Tibial artery (tissue), 4 donors: ENCODE measurements at regions of chr3 and their contacts with region 1.

Region 1: GRCh38 chr3:9915254-9916141 is 1.4 kb upstream of the IL17RC start:
- DNase-seq: peak; percentile 81 to 89
- H3K4me3 ChIP-seq: peak overlapping the region; percentile 55 to 73
- H3K27ac ChIP-seq: peak overlapping the region; percentile 92 to 95
- H3K4me1 ChIP-seq: peaks cover 5 to 61% (median 40%) of the 10 kb centered on the region in 4 donors
- H3K27me3 ChIP-seq: no peaks in the 10 kb centered on the region
- CTCF ChIP-seq: peak in 1 of 2 experiments; percentile 51

Region 2: GRCh38 chr3:9779721-9780457 is 135.6 kb before region 1 on chr3:
- intact Hi-C with region 1: no loop called
- DNase-seq: no peak
- H3K4me3 ChIP-seq: no peak overlapping the region
- H3K27ac ChIP-seq: no peak overlapping the region
- H3K4me1 ChIP-seq: peaks cover 0 to 16% (median 3%) of the 10 kb centered on the region in 4 donors
- H3K27me3 ChIP-seq: no peaks in the 10 kb centered on the region
- CTCF ChIP-seq: no peak

Region 3: GRCh38 chr3:9843715-9844438 is 71.6 kb before region 1 on chr3 and contains the start of gene RPUSD3:
- intact Hi-C with region 1: loop called (anchors 5 kb)
- DNase-seq: peak; percentile 98 to 99
- H3K4me3 ChIP-seq: peak within 1 kb of the TSS; percentile 61 to 85
- H3K27ac ChIP-seq: peak within 1 kb of the TSS; percentile 80 to 84
- H3K4me1 ChIP-seq: peaks cover 0 to 16% (median 12%) of the 10 kb centered on the region in 4 donors
- H3K27me3 ChIP-seq: no peaks in the 10 kb centered on the region
- CTCF ChIP-seq: no peak

Region 4: DNA sequence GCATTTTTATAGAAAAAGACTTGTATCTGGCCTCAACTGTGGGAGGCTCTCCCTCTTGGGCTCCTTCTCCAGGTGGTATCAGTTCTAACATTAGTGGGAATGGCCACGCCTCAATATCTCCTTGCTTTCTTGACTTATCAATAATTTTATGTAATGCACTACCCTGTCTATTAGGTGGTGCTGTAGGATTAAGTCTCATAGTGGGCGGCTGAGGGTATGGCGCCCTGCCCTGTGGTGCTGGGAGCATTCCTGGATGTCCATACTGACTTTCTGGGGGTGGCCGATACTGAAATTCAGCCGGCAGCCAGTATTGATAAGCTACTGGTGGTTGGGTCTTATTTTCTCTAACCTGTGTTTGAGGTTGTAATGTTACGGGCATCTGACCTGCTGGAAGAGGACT is 62.9 kb before region 1 on chr3:
- intact Hi-C with region 1: loop called (anchors 5 kb)
- DNase-seq: no peak
- H3K4me3 ChIP-seq: no peak overlapping the region
- H3K27ac ChIP-seq: no peak overlapping the region
- H3K4me1 ChIP-seq: no peaks in the 10 kb centered on the region
- H3K27me3 ChIP-seq: no peaks in the 10 kb centered on the region
- CTCF ChIP-seq: no peak

Region 5: DNA sequence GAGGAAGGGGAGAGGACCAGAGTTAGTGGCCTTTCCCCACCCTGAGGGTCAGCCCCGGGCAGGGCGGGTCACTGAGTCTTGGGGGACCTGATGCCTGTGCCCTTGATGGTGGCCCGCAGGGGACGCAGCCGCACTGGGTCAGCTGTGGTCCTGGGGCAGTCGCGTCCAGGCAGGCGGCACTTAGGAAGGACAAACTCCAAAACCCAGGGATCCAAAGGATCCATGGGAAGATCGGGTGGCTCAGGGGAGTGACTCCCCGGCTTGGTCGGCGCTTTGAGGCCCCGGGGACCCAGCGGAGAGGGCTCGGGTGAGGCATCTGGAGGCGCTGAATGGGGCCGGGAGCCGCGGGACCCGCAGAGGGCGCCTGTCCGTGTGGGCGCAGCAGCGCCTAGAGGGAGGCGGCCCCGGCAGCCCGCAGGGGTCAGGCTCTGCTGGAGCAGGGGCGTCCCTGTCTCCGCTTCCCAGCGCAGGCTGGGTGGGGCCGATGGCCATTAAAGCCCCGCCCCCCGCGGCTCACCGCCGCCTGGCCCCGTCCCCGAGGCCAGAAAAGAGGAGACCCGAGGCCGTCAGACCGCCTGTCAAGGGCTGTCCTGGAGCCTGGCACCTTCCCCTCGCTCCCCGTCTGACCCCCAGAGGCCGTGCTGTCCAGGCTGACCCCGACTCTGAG is 53.0 kb before region 1 on chr3:
- intact Hi-C with region 1: loop called (anchors 5 kb)
- DNase-seq: peak in 1 of 2 donors; percentile 39
- H3K4me3 ChIP-seq: peak overlapping the region; percentile 29 to 35
- H3K27ac ChIP-seq: peak overlapping the region; percentile 78 to 79
- H3K4me1 ChIP-seq: peaks cover 0 to 50% (median 28%) of the 10 kb centered on the region in 4 donors
- H3K27me3 ChIP-seq: no peaks in the 10 kb centered on the region
- CTCF ChIP-seq: peak; percentile 18 to 27

Region 6: DNA sequence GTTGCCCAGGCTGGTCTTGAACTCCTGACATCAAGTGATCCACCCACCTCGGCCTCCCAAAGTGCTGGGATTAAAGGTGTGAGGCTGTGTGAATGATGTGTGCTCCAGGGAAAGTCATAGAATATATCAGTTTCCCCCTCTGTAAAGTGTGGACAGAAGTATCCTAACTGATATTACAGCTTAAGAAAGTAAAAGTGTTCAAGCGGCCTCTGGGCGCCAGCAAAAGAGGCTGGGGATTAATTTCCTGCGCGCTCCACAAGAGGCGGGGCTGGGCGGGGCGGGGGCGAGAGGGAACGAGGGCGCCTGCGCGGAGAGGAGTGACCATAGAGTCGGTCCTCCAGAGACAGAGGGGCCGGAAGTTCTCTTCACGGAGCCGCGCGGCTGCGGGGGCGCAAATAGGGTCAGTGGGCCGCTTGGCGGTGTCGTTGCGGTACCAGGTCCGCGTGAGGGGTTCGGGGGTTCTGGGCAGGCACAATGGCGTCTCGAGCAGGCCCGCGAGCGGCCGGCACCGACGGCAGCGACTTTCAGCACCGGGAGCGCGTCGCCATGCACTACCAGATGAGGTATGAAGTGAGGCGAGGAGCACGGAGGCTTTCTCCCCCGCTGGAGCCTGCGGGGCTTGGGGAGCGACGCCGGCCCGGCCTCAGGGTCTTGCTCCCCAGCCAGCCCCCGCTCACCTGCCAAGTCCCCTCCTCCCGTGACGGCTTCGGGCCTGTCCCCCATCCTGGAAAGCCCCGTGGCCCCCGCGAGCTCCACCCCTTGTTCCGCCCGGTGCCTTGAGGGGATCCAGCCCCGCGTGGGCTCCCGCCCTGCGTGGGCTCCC is 25.0 kb before region 1 on chr3 and contains the start of gene JAGN1:
- intact Hi-C with region 1: loop called (anchors 2 kb)
- DNase-seq: peak; percentile 84 to 93
- H3K4me3 ChIP-seq: peak within 1 kb of the TSS; percentile 84 to 95
- H3K27ac ChIP-seq: peak within 1 kb of the TSS; percentile 92 to 98
- H3K4me1 ChIP-seq: peaks cover 0 to 28% (median 21%) of the 10 kb centered on the region in 4 donors
- H3K27me3 ChIP-seq: no peaks in the 10 kb centered on the region
- CTCF ChIP-seq: peak in 1 of 2 experiments; percentile 7